WTC11 (cell line): ENCODE measurements at regions of chr11 and their contacts with region 1.

Region 1: DNA sequence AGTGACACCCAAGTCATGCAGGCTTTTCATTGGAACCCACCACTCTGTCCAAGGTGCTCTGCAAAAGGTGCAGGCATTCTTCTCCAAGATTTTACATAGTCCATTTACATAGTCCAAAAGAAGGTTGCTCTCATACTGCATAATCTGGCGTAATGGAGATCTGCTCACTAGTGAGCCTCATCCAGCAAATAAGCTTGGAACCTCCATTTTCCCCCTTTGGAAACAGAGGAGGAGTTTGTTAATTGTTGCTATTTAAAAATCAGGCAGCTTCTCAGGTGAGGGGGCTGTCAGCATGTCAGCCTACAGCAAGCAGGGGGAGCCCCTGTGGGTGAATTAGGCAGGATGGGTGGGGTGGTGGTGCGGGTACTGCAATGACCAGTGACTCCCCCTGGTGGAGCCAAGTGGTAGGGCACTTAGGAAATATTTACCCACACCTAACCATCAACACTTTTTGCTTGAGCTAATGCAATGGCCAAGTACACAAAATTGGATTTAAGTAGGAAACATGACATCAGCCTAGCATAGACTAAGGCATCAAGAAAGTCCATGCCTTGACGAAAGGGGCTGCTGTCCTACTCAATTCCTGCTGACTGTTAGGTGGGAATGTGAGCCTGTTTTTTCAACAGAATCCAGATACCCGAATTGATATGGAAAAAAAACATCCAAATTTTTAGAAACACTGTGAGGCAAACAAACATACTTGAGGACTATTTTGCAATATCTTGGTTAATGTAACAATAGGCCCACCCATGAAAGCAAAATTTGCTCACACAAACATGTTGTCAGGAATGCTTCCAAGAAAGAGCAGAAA is 64.5 kb downstream of the AMBRA1 start:
- DNase-seq: peak; percentile 88
- ATAC-seq: peak; percentile 99
- H3K4me3 Mint-ChIP-seq: no peak overlapping the region
- H3K27ac Mint-ChIP-seq: no peak overlapping the region; the same call in 1 of the 2 replicates
- H3K4me1 Mint-ChIP-seq: peaks cover 16% of the 10 kb centered on the region
- H3K27me3 Mint-ChIP-seq: no peaks in the 10 kb centered on the region
- CTCF ChIP-seq: peak; percentile 94

Region 2: DNA sequence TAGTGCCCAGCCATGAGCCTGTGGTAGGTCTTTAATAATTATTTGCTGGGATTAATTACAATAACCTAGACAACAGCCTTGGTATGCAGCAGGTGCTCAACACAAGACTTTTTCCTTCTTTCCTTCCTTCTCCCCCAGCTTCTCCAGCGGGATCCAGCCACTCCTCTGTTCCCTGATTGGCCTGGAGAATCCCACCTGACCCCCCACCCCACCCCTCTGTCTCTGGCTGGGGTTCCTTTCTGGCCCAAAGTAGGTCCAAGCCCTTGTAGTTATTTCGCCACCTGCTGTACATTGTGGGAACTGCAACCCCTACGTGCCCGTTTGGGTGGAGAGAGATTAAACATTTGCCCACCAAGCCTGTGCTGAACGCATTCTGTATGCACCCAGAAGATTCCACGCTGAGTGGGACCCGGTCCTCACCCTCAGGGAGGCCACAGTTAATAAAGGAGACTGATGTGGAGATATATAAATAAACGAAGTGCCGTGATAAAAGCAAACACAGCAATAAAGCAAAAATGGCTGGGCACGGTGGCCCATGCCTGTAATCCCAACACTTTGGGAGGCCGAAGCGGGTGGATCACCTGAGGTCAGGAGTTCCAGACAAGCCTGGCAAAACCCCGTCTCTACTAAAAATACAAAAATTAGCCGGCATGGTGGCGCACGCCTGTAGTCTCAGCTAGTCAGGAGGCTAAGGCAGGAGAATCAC is 214.1 kb before region 1 on chr11:
- CTCF ChIA-PET with region 1: no interaction called
- POLR2A ChIA-PET with region 1: no interaction called
- DNase-seq: peak; percentile 95
- ATAC-seq: peak; percentile 97
- H3K4me3 Mint-ChIP-seq: no peak overlapping the region
- H3K27ac Mint-ChIP-seq: no peak overlapping the region
- H3K4me1 Mint-ChIP-seq: peaks cover 6% of the 10 kb centered on the region
- H3K27me3 Mint-ChIP-seq: no peaks in the 10 kb centered on the region; the same call in 1 of the 2 replicates
- CTCF ChIP-seq: peak; percentile 98

Region 3: DNA sequence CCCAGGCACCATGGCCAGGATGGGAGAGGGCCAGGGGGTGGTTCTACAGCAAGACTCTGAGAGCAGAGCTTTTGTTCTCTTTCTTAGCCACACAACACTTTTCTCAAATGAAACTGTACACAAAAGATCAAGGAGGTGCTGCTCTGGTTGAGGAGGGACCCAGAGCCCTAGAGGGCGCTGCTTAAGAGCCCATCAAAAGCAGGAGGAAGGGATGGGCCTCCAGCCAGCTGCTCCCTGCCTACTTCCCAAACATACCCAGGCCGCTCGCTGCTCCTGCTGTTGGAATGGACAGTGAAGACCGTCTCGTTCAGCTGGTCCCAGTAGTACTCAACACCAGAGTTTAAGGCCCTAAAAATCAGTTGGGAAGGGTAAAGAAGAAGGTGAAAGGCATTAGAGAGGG is 119.3 kb before region 1 on chr11:
- CTCF ChIA-PET with region 1: interaction called, 30 read pairs
- POLR2A ChIA-PET with region 1: no interaction called
- DNase-seq: peak; percentile 68
- ATAC-seq: peak; percentile 95
- H3K4me3 Mint-ChIP-seq: no peak overlapping the region
- H3K27ac Mint-ChIP-seq: no peak overlapping the region
- H3K4me1 Mint-ChIP-seq: no peaks in the 10 kb centered on the region
- H3K27me3 Mint-ChIP-seq: no peaks in the 10 kb centered on the region
- CTCF ChIP-seq: no peak

Region 4: DNA sequence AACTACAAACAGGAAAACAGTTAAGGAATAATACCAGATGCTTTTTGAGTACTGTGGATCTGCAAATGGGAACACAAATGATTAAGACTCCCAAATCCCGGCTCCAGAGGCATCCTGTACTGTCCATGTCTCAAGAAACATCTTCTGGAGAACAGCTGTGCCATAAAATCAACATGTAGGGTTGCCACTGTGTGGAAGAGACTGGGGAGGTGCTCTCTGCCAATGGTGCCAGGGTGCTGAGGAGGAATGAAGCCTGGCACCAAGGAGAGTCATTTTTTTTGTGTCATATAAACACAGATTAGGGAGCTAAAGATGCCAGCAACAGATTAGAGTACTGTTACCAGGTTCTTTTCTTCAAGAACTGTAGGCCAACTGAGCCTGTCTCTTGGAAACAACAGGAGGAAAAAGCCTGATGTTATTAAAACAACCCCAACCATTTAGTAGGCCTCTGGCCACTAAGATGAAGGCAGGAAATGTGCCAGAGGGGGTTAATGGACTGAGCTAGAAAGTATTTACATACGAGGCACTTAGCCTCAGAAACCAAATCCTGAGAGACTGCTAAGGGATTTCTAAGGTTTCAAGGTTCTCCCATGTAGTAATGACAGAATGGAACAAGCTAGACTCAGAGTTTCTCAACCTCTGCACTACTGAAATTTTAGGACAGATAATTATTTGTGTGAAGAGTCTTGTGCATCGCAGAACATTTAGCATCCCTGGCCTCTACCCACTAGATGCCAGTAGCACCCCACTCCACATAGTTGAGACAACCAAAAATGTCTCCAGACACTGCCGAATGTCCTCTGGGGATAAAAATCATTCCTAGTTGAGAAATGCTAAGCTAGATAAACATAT is 83.2 kb before region 1 on chr11:
- CTCF ChIA-PET with region 1: interaction called, 14 read pairs
- POLR2A ChIA-PET with region 1: no interaction called
- DNase-seq: no peak
- ATAC-seq: peak; percentile 92
- H3K4me3 Mint-ChIP-seq: no peak overlapping the region
- H3K27ac Mint-ChIP-seq: no peak overlapping the region
- H3K4me1 Mint-ChIP-seq: peaks cover 24% of the 10 kb centered on the region
- H3K27me3 Mint-ChIP-seq: peaks cover 11% of the 10 kb centered on the region
- CTCF ChIP-seq: no peak

Region 5: DNA sequence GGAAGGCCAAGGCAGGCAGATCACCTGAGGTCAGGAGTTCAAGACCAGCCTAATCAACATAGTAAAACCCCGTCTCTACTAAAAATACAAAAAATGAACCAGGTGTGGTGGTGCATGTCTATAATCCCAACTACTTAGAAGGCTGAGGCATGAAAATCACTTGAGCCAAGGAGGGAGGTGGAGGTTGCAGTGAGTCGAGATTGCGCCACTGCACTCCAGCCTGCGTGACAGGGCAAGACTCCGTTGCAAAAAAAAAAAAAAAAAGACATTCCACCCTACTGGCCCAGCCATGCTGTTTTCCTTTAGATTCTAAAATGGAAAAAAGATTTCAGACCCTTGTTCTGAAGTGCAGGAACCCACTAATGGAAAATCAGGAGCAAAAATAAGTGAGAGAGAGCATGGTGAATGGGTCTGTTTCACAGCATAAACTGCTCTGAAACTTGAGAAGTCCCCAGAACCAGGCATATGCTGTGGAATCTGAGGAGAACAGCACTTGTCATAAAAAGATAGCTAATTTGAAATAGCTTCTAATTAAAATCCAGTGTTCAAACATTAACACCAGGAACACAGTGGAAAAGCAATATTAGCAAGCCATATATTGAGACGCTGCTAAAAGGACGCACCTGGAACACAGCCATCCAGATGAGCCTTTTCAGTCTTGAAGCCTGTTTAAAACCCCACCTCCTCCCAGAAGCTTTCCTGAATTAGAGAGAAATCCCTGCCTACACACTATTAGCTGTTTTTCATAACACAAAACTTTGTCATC is 71.5 kb before region 1 on chr11:
- CTCF ChIA-PET with region 1: interaction called, 10 read pairs
- POLR2A ChIA-PET with region 1: no interaction called
- DNase-seq: no peak
- ATAC-seq: no peak
- H3K4me3 Mint-ChIP-seq: no peak overlapping the region
- H3K27ac Mint-ChIP-seq: peak overlapping the region; percentile 30; the same call in 1 of the 2 replicates
- H3K4me1 Mint-ChIP-seq: peaks cover 38% of the 10 kb centered on the region
- H3K27me3 Mint-ChIP-seq: no peaks in the 10 kb centered on the region
- CTCF ChIP-seq: no peak

Region 6: DNA sequence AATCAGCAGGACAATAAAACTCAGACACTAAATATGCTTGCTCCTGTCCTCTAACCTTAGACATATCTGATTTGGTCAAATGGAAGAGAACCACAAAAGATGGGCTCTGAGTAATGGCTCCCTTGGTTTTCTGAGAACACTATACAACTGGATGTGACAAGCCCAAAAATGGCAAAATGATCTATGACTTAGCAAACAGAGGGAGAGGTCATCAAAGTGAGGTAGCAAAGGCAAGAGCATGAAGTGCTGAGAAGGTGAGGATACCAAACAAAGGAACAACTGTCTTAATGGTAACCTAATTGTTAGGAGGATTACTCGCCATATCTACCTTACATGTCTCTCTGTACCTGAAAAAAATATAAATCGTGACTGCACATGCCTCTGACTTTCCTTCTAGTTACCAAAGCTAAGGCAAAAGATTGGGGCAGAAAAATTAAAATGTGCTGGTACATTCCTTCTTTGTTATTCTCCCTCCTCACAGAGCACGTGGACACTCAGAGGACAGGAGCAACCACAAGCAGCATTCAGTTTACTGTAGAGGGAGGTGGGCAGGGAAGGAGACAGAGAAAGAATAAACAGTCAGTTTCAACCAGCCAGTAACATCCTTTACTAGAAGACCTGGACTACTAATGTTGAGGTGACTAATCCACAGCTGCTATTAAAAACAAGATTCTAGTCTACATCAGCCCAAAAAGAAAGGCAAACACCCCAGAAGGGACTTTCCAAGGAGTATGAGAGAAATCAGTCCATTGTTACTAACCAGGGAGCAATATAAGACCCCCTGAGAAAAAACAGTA is 24.3 kb before region 1 on chr11:
- CTCF ChIA-PET with region 1: interaction called, 22 read pairs
- POLR2A ChIA-PET with region 1: interaction called, 3 read pairs
- DNase-seq: no peak
- ATAC-seq: no peak
- H3K4me3 Mint-ChIP-seq: no peak overlapping the region
- H3K27ac Mint-ChIP-seq: no peak overlapping the region; the same call in 1 of the 2 replicates
- H3K4me1 Mint-ChIP-seq: peaks cover 20% of the 10 kb centered on the region
- H3K27me3 Mint-ChIP-seq: no peaks in the 10 kb centered on the region
- CTCF ChIP-seq: no peak

Region 7: DNA sequence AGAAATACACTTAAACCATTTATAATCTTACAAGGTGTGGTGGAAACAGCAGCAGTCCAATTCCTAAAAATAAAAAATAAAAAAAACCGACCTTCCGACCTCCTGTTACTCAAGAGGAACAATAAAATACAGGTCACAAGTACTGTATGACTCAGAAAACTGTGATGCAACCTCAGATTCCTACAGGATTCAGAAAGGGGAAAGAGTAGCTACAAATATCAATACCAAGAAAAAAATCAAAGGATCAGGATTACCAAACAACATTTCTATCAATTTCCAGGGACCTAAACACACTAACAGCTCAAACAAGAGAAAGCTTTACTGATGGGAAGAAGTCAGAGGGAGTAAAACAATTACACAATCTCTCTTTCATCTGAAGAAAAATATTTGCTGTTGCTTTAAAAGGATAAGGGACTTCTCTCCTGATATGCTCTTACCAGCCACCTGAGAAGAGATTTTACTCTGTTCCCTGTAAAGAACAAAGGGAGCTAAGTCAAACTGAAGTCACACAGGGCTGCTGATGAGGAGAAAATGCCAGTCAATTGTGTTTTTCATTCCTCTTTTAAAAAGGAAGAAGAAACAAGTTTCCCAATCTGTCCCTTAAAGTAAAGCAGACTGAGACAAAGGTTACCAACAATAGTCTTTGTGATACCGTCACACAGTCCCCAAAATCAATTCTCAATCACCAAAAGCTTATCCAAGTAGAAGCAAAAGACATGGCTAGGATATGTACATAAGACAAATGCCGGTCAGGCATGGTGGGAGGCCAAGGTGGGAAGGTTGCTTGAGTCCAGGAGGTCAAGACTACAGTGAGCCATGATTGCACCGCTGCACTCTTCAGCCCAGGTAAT is 25.1 kb after region 1 on chr11:
- CTCF ChIA-PET with region 1: interaction called, 11 read pairs
- POLR2A ChIA-PET with region 1: no interaction called
- DNase-seq: no peak
- ATAC-seq: peak; percentile 36; the same call in 1 of the 2 replicates
- H3K4me3 Mint-ChIP-seq: no peak overlapping the region
- H3K27ac Mint-ChIP-seq: peak overlapping the region; percentile 96
- H3K4me1 Mint-ChIP-seq: peaks cover 17% of the 10 kb centered on the region
- H3K27me3 Mint-ChIP-seq: no peaks in the 10 kb centered on the region
- CTCF ChIP-seq: no peak

Region 8: GRCh38 chr11:46876471-46876870 is 347.2 kb after region 1 on chr11:
- CTCF ChIA-PET with region 1: no interaction called
- POLR2A ChIA-PET with region 1: no interaction called
- DNase-seq: no peak
- ATAC-seq: no peak
- H3K4me3 Mint-ChIP-seq: no peak overlapping the region
- H3K27ac Mint-ChIP-seq: no peak overlapping the region
- H3K4me1 Mint-ChIP-seq: no peaks in the 10 kb centered on the region
- H3K27me3 Mint-ChIP-seq: no peaks in the 10 kb centered on the region
- CTCF ChIP-seq: no peak